ENCODE measurements at regions of chr9 and their contacts with region 1.

Region 1: DNA sequence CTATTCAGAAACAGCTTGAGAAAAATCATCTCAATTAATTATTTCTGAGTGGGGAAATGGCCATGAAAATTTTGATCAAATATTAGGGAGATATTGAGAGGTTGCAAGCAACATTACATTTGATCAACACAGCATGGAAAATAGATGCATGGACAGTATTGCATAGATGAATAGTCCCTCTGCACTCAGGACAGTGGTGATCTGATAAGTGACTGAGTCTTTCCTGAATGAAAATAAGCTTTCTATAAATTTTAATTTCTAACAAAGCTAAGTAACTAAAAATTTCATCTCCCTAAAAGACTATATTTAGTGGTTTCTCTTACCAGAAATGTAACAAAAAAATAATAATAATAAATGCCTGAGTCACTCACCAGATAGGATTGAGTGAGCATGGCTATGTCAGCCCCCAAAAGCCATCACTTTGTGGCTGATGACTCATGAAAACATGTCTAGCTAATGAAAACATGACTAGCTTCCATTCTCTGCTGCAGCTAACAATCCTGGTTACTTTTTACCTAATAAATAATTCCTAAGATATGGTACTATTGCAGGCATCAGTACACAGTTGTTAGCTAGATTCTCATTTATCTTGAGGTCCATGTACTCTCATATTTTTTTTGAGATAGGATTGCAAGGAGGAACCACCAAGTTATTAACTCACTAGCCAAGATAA is 1294.8 kb upstream of the ACO1 start:
- DNase-seq: no peak
- H3K4me3 ChIP-seq: no peak overlapping the region
- H3K4me1 ChIP-seq: peaks cover 3% of the 10 kb centered on the region; the same call in 1 of the 2 replicates
- H3K27me3 ChIP-seq: no peaks in the 10 kb centered on the region

Region 2: DNA sequence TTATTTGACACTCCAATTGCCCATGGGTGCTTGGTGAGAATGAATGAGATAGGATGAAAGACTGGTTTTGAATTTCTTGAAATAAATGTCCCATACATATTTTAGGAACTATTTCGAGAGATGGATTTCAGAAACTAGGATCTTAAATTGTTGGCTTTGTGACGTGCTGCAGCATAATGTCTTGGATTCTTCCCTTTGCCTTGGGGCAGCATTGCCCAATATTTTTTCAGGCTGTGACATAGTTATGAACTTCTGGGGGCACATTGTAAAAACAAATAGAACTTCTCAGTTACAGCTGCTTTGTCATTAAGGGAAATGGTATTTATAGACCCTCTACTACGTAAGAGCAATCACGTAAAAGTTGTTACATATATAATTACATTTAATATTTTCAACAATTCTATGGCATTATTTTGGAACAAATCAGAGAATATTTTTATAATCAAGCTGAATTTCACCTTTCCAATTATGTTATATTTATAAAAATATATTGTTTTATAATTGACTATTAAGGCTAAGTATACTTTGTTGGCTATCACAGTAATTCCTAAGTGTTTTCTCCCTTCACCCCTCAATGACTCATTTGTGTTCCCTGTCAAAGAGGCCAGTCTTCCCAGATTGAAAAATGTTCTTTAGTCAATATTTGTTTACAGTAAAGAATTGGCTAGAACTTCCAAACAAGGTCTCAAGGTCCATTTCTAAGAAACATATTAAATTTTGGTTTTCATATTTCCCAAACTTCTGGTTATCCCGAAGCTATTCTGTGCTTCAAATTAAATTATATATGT is 93.5 kb before region 1 on chr9:
- in situ Hi-C with region 1: loop called (anchors 25 kb)
- DNase-seq: no peak
- H3K4me3 ChIP-seq: no peak overlapping the region
- H3K4me1 ChIP-seq: no peaks in the 10 kb centered on the region
- H3K27me3 ChIP-seq: no peaks in the 10 kb centered on the region

Region 3: DNA sequence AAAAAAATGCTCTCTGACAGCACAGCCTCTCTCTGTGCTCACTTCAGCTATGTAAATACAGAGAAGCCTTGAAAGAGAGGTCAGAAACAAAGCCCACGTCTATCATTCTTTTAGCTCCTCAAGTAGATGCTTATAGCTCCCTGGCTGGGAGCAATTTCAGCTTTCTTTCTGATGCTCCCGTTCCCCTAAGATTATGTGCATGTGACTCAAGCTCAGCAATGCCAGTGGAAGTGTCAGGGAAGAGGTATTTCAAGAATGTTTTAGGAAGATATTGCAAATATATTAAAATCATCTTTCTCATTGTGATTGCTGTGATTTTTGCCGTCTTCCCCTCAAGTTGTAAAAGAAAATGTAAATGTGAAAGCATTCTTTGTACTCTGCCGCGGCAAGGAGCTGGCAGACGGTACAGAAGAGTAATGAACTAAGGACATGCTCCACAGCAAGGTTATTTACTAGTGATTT is 58.9 kb before region 1 on chr9:
- in situ Hi-C with region 1: no loop called
- DNase-seq: peak; percentile 69 to 95
- H3K4me3 ChIP-seq: no peak overlapping the region
- H3K4me1 ChIP-seq: peaks cover 50% of the 10 kb centered on the region
- H3K27me3 ChIP-seq: no peaks in the 10 kb centered on the region

Measured in HAP-1 (cell line).